WTC11 (cell line): ENCODE measurements at regions of chr2 and their contacts with region 1.

Region 1: DNA sequence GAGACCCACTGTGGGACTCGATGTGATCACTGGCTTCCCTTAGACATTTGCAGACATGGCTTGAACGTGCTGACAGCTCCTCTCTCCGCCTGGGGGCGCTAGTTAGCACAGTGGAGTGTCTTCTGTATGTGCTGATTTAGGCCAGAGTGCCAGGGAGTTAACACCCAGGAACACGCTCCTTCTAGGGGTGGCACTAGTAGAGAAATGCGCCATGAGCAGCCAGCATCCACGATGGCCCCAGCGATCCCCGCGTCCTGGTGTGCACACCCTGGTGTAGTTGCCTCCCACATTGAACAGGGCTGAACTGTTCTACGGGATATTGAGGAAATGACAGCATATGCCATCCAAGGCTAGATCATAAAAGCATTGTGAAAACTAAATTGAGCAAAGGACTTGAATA is 11.4 kb upstream of the NMUR1 start:
- DNase-seq: peak; percentile 86
- ATAC-seq: peak; percentile 99
- H3K4me3 Mint-ChIP-seq: no peak overlapping the region
- H3K27ac Mint-ChIP-seq: no peak overlapping the region
- H3K4me1 Mint-ChIP-seq: no peaks in the 10 kb centered on the region
- H3K27me3 Mint-ChIP-seq: no peaks in the 10 kb centered on the region
- CTCF ChIP-seq: peak; percentile 85

Region 2: GRCh38 chr2:231482806-231483391 is 58.7 kb before region 1 on chr2:
- CTCF ChIA-PET with region 1: interaction called, 14 read pairs
- POLR2A ChIA-PET with region 1: no interaction called
- DNase-seq: peak; percentile 82
- ATAC-seq: peak; percentile 84
- H3K4me3 Mint-ChIP-seq: no peak overlapping the region
- H3K27ac Mint-ChIP-seq: no peak overlapping the region
- H3K4me1 Mint-ChIP-seq: peaks cover 7% of the 10 kb centered on the region
- H3K27me3 Mint-ChIP-seq: no peaks in the 10 kb centered on the region; the same call in 1 of the 2 replicates
- CTCF ChIP-seq: peak; percentile 55

Region 3: GRCh38 chr2:231526341-231527090 is 15.1 kb before region 1 on chr2:
- CTCF ChIA-PET with region 1: interaction called, 36 read pairs
- POLR2A ChIA-PET with region 1: no interaction called
- DNase-seq: no peak
- ATAC-seq: peak; percentile 43
- H3K4me3 Mint-ChIP-seq: no peak overlapping the region
- H3K27ac Mint-ChIP-seq: no peak overlapping the region
- H3K4me1 Mint-ChIP-seq: peaks cover 14% of the 10 kb centered on the region
- H3K27me3 Mint-ChIP-seq: peaks cover 35% of the 10 kb centered on the region
- CTCF ChIP-seq: no peak

Region 4: DNA sequence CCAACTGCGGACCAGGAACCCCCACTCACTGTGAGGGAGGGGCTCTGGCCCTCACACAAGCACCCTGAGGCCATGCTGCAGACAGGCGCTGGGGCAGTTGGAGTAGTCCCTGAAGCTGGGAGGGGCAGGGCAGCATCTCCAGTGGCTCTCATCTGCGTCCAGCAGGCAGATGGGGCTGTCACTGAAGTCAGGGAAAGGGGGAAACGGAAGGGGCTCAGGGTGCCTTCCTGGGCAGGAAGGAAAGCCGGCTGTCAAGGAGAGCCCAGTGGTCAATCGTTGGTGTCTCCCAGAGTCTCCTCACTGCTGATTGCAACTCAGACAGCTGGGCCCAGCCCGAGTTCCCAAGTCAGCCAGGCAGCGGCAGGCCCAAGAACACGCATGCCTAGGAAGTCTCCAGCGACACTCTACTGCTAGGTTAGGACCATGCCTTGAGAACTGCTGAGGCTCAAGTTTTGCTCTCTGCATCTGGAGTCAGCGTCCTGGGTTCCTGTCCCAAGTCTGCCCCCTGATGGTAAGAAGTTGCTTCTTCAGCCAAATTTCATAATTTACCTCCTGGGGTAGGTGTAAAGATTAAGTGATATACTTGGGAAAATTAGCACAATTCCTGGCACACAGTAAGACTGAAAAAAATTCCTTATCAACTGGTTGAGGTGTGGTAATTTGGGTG is 16.1 kb after region 1 on chr2:
- CTCF ChIA-PET with region 1: interaction called, 12 read pairs
- POLR2A ChIA-PET with region 1: no interaction called
- DNase-seq: peak; percentile 52
- ATAC-seq: peak; percentile 97
- H3K4me3 Mint-ChIP-seq: no peak overlapping the region
- H3K27ac Mint-ChIP-seq: no peak overlapping the region
- H3K4me1 Mint-ChIP-seq: peaks cover 7% of the 10 kb centered on the region
- H3K27me3 Mint-ChIP-seq: peaks cover 3% of the 10 kb centered on the region; the same call in 1 of the 2 replicates
- CTCF ChIP-seq: peak; percentile 44; the same call in 1 of the 2 replicates

Region 5: DNA sequence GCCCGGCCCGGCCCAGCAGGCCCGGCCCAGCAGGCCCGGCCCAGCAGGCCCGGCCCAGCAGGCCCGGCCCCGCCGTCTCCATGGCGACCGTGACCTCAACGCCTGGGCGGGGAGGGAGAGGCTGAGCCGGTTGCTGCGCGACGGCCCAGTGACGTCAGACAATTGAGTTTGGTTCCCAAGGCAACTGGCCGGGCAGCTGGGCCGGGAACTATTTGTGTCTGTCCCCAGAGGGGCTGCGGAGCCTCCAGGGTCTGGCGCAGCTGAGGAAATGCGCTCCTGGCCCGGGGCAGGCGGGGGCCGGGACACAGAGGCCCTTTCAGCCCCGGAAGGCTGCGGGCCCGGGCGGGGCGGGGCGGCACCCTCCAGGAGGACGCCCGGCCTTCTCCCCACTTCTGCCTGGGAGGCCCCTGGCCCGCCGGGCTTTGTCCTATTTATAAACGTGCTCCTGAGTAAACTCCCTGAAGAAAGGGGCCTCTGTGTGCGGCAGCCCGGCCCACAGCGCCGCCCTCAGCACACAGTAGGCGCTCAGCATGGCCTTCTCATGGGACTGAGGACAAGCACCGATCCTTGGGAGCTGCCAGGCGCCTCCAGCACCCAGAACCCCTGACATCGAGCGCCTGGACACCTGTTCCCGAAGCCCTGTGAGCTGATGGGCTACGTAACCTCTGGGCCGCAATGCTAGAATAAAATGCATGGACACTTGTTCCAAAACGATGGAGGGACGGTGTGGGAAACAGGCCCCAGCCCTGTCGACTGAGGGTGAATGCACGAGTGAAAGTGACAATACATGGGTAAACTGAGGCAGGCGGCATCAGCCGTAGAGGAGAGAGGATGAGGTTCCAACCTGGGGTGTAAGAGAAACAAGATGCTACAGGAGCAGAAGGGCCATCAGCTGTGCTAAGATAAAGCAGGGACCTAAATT is 63.3 kb after region 1 on chr2:
- CTCF ChIA-PET with region 1: interaction called, 14 read pairs
- POLR2A ChIA-PET with region 1: no interaction called
- DNase-seq: peak; percentile 99
- ATAC-seq: peak; percentile 75
- H3K4me3 Mint-ChIP-seq: peak overlapping the region; percentile 61
- H3K27ac Mint-ChIP-seq: peak overlapping the region; percentile 94
- H3K4me1 Mint-ChIP-seq: peaks cover 30% of the 10 kb centered on the region
- H3K27me3 Mint-ChIP-seq: no peaks in the 10 kb centered on the region
- CTCF ChIP-seq: no peak